ENCODE measurements at regions of chr7 and their contacts with region 1.

Region 1: GRCh38 chr7:12638851-12639467 is 48.5 kb upstream of the ARL4A start:
- DNase-seq: no peak
- H3K4me3 ChIP-seq: no peak overlapping the region
- H3K27ac ChIP-seq: no peak overlapping the region
- H3K4me1 ChIP-seq: peaks cover 0 to 29% (median 8%) of the 10 kb centered on the region in 4 donors
- H3K27me3 ChIP-seq: no peaks in the 10 kb centered on the region
- CTCF ChIP-seq: peak in 3 of 4 experiments; percentile 30 to 62 (median 37)
- EP300 ChIP-seq: no peak
- POLR2A ChIP-seq: no peak

Region 2: GRCh38 chr7:12539681-12540080 is 99.3 kb before region 1 on chr7:
- intact Hi-C with region 1: loop called (anchors 10 kb)
- DNase-seq: no peak
- H3K4me3 ChIP-seq: no peak overlapping the region
- H3K27ac ChIP-seq: no peak overlapping the region
- H3K4me1 ChIP-seq: no peaks in the 10 kb centered on the region
- H3K27me3 ChIP-seq: no peaks in the 10 kb centered on the region
- CTCF ChIP-seq: no peak
- EP300 ChIP-seq: no peak
- POLR2A ChIP-seq: no peak

Region 3: DNA sequence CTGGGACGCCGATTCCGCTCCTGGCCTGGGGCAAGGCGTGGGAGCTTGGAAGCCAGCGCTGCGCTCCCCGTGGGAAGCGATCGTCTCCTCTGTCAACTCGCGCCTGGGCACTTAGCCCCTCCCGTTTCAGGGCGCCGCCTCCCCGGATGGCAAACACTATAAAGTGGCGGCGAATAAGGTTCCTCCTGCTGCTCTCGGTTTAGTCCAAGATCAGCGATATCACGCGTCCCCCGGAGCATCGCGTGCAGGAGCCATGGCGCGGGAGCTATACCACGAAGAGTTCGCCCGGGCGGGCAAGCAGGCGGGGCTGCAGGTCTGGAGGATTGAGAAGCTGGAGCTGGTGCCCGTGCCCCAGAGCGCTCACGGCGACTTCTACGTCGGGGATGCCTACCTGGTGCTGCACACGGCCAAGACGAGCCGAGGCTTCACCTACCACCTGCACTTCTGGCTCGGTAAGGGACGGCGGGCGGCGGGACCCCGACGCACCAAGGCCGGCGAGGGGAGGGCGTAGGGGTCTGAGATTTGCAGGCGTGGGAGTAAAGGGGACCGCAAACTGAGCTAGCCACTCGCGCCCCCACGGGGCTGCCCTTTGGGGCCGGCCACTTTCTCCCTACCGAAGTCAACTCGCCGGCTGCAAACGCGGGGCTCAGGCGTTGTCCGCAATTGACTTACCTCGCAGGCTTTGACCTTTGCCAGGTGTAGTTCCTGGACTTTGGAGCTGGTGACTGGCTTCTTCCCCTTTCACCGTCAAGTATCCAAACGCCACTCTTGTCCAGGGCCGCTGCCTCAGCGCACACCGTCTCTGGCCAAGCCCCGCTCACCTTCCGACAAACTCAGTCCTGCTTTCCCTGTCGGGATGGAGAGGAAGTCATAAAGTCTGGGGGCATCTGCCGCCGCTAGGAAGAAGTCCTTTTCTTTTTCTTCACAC is 68.2 kb before region 1 on chr7 and contains the start of gene SCIN:
- intact Hi-C with region 1: no loop called
- DNase-seq: peak; percentile 66
- H3K4me3 ChIP-seq: peak within 1 kb of the TSS in 3 of 4 donors; percentile 29 to 47 (median 41)
- H3K27ac ChIP-seq: no peak within 1 kb of the TSS
- H3K4me1 ChIP-seq: peaks cover 0 to 14% (median 14%) of the 10 kb centered on the region in 4 donors
- H3K27me3 ChIP-seq: peaks cover 0 to 44% (median 14%) of the 10 kb centered on the region in 3 donors
- CTCF ChIP-seq: no peak
- EP300 ChIP-seq: no peak
- POLR2A ChIP-seq: no peak
- total RNA-seq, gene SCIN: 0.28 to 1.8 (median 0.72) TPM

Region 4: GRCh38 chr7:12686894-12687717 is 48.1 kb after region 1 on chr7 and contains the start of gene ARL4A:
- intact Hi-C with region 1: loop called (anchors 1 kb)
- DNase-seq: peak; percentile 99
- H3K4me3 ChIP-seq: peak within 1 kb of the TSS; percentile 74 to 99 (median 91)
- H3K27ac ChIP-seq: peak within 1 kb of the TSS; percentile 88 to 97 (median 94)
- H3K4me1 ChIP-seq: peaks cover 0 to 24% (median 10%) of the 10 kb centered on the region in 4 donors
- H3K27me3 ChIP-seq: no peaks in the 10 kb centered on the region
- CTCF ChIP-seq: peak in 1 of 4 experiments; percentile 14
- EP300 ChIP-seq: no peak
- POLR2A ChIP-seq: peak; percentile 81 to 86
- total RNA-seq, gene ARL4A: 33.2 to 42.8 (median 35.7) TPM

Measured in sigmoid colon (tissue), 7 donors.